BJ (cell line): ENCODE measurements at regions of chr4 and their contacts with region 1.

Region 1: DNA sequence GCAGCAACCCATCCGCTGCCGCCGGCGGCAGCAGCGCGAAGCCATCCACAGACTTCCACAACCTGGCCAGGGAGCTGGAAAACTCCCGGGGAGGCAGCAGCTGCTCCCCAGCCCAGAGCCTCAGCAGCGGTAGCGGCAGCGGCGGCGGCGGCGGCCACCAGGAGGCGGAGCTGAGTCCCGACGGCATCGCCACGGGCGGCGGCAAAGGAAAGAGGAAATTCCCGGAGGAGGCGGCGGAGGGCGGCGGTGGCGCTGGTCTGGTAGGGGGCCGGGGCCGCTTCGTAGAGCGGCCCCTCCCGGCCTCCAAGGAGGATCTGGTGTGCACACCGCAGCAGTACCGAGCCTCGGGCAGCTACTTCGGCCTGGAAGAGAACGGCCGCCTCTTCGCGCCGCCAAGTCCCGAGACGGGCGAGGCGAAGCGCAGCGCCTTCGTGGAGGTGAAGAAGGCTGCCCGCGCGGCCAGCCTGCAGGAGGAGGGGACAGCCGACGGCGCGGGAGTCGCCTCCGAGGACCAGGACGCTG is 4.9 kb downstream of the PRDM8 start:
- DNase-seq: no peak
- H3K4me3 ChIP-seq: peak overlapping the region; percentile 47
- H3K27me3 ChIP-seq: no peaks in the 10 kb centered on the region
- CTCF ChIP-seq: peak; percentile 84

Region 2: GRCh38 chr4:80184053-80184790 is 18.0 kb before region 1 on chr4:
- CTCF ChIA-PET with region 1: interaction called, 108 read pairs
- POLR2A ChIA-PET with region 1: interaction called, 4 read pairs
- DNase-seq: no peak
- H3K4me3 ChIP-seq: peak overlapping the region; percentile 83
- H3K27me3 ChIP-seq: no peaks in the 10 kb centered on the region; the same call in 1 of the 2 replicates
- CTCF ChIP-seq: peak; percentile 94

Region 3: GRCh38 chr4:80189956-80190677 is 12.1 kb before region 1 on chr4:
- CTCF ChIA-PET with region 1: interaction called, 108 read pairs
- POLR2A ChIA-PET with region 1: interaction called, 16 read pairs
- DNase-seq: no peak
- H3K4me3 ChIP-seq: no peak overlapping the region
- H3K27me3 ChIP-seq: no peaks in the 10 kb centered on the region; the same call in 1 of the 2 replicates
- CTCF ChIP-seq: no peak

Region 4: GRCh38 chr4:80215449-80216052 is 13.3 kb after region 1 on chr4:
- CTCF ChIA-PET with region 1: interaction called, 14 read pairs
- POLR2A ChIA-PET with region 1: no interaction called
- DNase-seq: no peak
- H3K4me3 ChIP-seq: no peak overlapping the region
- H3K27me3 ChIP-seq: no peaks in the 10 kb centered on the region
- CTCF ChIP-seq: peak; percentile 57

Region 5: GRCh38 chr4:80221161-80221560 is 18.9 kb after region 1 on chr4:
- CTCF ChIA-PET with region 1: interaction called, 14 read pairs
- POLR2A ChIA-PET with region 1: no interaction called
- DNase-seq: no peak
- H3K4me3 ChIP-seq: no peak overlapping the region
- H3K27me3 ChIP-seq: no peaks in the 10 kb centered on the region
- CTCF ChIP-seq: peak; percentile 36

Region 6: GRCh38 chr4:80335554-80336358 is 133.5 kb after region 1 on chr4 and contains the start of gene CFAP299:
- CTCF ChIA-PET with region 1: interaction called, 10 read pairs
- POLR2A ChIA-PET with region 1: no interaction called
- DNase-seq: peak; percentile 46
- H3K4me3 ChIP-seq: peak within 1 kb of the TSS; percentile 73
- H3K27me3 ChIP-seq: no peaks in the 10 kb centered on the region
- CTCF ChIP-seq: peak; percentile 79
- polyA plus RNA-seq, gene CFAP299: 0.23 and 3.3 TPM in 2 replicates